Right ventricle myocardium superior (tissue), 1 donor: ENCODE measurements at regions of chr18 and their contacts with region 1.

Region 1: DNA sequence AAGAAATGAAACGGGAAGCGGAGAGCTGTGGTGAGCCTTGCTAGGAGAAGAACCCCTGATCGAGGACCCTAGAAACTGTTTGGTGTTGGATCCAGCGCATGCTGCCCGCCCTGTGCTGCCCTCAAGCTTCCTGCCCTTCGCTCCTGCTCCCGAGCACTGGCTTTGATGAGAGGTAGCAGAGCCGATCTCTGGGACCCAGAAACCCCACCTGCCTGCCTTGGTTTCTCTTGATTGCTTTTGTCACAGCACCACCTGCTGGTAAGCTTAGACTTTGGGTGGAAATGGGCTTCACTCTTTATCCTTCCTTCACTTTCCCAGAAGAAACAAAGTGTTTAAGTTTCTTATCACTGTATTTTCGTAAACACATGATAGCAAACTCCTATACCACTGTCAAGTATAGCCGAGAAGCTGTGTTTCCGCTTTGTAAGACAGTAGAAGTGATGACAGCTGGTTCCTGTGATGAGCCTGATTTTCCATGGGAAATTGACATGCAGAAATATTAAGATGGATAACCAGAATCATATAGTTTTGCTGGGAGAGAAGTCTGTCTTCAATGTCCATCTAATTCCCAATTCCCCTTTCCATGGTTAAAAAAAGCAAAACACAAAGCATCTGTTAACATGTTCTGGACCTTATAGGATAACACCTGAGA is 267.4 kb downstream of the PHLPP1 start:
- DNase-seq: no peak
- ATAC-seq: peak; percentile 85

Region 2: DNA sequence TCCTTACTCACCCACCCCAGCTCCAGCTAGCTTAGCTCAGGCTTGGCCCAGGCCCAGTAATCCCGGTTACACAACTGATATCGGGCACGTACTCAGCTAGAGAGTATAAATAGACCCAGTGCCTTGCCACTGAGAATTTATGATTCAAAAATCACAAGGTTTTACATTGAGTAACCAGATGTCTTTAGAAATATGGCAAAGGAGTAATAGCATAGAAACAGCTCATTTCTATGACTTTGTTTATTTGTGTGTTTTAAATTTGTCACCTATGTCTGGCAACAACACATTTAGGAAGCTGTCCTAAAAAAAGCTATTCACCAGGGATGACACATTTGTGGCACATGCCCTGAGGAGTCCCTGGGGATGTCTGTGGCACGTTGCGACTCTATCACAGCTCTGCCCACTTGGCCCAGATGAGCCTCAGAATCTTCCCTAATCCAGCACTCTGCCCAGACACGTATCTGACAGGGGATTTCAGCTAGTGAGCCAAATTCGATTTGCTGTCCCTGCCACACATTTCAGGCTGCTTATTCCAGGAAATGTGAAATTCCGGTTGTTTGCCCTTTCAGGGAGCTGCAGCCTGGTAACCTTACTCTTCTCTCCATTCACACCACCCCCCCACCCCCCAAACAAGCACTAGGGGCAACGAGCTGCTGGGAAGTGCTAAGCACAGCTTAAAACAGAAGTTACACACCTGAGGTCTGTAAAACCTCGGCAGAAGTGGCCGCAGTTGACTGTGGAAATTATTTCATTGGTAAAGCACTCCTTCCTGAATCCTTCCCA is 545.3 kb before region 1 on chr18:
- intact Hi-C with region 1: loop called (anchors 10 kb)
- DNase-seq: peak; percentile 93
- ATAC-seq: peak; percentile 97

Region 3: GRCh38 chr18:62714671-62715435 is 267.9 kb before region 1 on chr18:
- intact Hi-C with region 1: loop called (anchors 2 kb)
- DNase-seq: peak; percentile 99
- ATAC-seq: peak; percentile 96